ENCODE measurements at regions of chr1 and their contacts with region 1.

Region 1: GRCh38 chr1:38834937-38835827 is 24.4 kb downstream of the RRAGC start:
- DNase-seq: peak; percentile 77
- H3K4me3 ChIP-seq: no peak overlapping the region
- H3K27ac ChIP-seq: no peak overlapping the region
- H3K4me1 ChIP-seq: peaks cover 10% of the 10 kb centered on the region
- H3K27me3 ChIP-seq: peaks cover 16 to 23% of the 10 kb centered on the region in 2 experiments
- CTCF ChIP-seq: peak; percentile 60 to 67
- POLR2A ChIP-seq: no peak

Region 2: DNA sequence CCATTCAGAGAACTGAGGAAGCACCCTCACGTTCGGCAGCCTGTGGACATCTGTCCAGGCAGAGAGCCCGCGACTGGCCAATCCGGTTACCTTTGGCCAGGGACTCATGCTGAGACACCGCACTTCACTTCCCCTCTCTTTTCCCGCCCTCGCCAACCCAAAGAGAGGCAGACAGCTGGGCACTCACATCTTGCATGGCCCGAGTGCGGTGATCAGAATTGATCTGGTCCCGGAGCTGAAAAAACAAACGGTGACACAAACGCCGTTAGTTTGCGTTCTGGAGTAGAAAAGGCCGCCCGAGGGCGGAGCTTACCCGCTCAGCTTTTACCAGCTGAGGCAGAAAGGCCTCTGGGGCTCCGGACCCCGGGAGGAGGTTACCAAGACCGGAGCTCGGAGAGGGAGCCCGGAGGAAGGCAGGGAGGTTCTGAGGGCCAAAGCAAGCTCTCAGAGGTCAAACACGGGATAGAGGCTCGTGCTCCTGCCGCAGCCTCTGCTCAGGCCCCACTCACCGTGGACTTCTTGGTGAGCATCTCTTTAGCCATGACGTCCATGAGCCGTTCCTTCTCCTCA is 845.7 kb before region 1 on chr1:
- CTCF ChIA-PET with region 1: interaction called, 7 read pairs
- POLR2A ChIA-PET with region 1: no interaction called
- dilution Hi-C with region 1: no loop called
- intact Hi-C with region 1: loop called (anchors 2 kb)
- DNase-seq: no peak
- H3K4me3 ChIP-seq: peak overlapping the region; percentile 78 to 81 (median 78)
- H3K27ac ChIP-seq: peak overlapping the region; percentile 24
- H3K4me1 ChIP-seq: peaks cover 9% of the 10 kb centered on the region
- H3K27me3 ChIP-seq: no peaks in the 10 kb centered on the region
- CTCF ChIP-seq: no peak
- POLR2A ChIP-seq: no peak

Region 3: DNA sequence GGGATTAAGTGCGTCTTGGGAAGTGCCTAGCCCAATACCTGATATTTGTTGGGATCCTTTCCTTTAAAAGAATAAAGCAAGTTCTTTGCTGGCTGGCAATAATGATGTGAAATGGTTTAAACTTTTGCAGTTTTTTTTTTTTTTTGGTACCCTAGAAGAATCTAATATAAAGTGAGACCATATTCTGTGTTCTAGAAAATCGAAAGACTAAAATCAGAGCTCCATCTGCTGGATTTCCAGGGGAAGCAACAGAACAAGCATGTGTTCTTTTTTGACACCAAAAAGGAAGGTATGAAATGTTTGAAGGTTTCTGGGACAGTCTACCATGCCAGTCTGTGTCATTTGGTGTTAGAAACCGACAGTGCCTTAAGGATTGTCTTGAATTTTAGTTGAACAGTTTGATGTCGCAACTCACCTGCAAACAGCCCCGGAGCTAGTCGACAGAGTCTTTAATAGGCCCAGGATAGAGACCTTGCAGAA is 816.3 kb before region 1 on chr1:
- CTCF ChIA-PET with region 1: interaction called, 58 read pairs
- POLR2A ChIA-PET with region 1: no interaction called
- dilution Hi-C with region 1: no loop called
- intact Hi-C with region 1: no loop called
- DNase-seq: peak; percentile 28
- H3K4me3 ChIP-seq: no peak overlapping the region
- H3K27ac ChIP-seq: no peak overlapping the region
- H3K4me1 ChIP-seq: peaks cover 32% of the 10 kb centered on the region
- H3K27me3 ChIP-seq: no peaks in the 10 kb centered on the region
- CTCF ChIP-seq: peak; percentile 49 to 55
- POLR2A ChIP-seq: no peak

Region 4: GRCh38 chr1:38037221-38037939 is 797.8 kb before region 1 on chr1:
- CTCF ChIA-PET with region 1: interaction called, 16 read pairs
- POLR2A ChIA-PET with region 1: interaction called, 4 read pairs
- dilution Hi-C with region 1: no loop called
- intact Hi-C with region 1: no loop called
- DNase-seq: no peak
- H3K4me3 ChIP-seq: no peak overlapping the region
- H3K27ac ChIP-seq: no peak overlapping the region
- H3K4me1 ChIP-seq: no peaks in the 10 kb centered on the region
- H3K27me3 ChIP-seq: peaks cover 14 to 18% of the 10 kb centered on the region in 2 experiments
- CTCF ChIP-seq: peak; percentile 21 to 35
- POLR2A ChIP-seq: no peak

Region 5: GRCh38 chr1:38114241-38115026 is 720.7 kb before region 1 on chr1:
- CTCF ChIA-PET with region 1: no interaction called
- POLR2A ChIA-PET with region 1: no interaction called
- dilution Hi-C with region 1: no loop called
- intact Hi-C with region 1: loop called (anchors 10 kb)
- DNase-seq: peak; percentile 43
- H3K4me3 ChIP-seq: no peak overlapping the region
- H3K27ac ChIP-seq: no peak overlapping the region
- H3K4me1 ChIP-seq: peaks cover 11% of the 10 kb centered on the region
- H3K27me3 ChIP-seq: peaks cover 0 to 4% of the 10 kb centered on the region in 2 experiments
- CTCF ChIP-seq: no peak
- POLR2A ChIP-seq: no peak

Region 6: DNA sequence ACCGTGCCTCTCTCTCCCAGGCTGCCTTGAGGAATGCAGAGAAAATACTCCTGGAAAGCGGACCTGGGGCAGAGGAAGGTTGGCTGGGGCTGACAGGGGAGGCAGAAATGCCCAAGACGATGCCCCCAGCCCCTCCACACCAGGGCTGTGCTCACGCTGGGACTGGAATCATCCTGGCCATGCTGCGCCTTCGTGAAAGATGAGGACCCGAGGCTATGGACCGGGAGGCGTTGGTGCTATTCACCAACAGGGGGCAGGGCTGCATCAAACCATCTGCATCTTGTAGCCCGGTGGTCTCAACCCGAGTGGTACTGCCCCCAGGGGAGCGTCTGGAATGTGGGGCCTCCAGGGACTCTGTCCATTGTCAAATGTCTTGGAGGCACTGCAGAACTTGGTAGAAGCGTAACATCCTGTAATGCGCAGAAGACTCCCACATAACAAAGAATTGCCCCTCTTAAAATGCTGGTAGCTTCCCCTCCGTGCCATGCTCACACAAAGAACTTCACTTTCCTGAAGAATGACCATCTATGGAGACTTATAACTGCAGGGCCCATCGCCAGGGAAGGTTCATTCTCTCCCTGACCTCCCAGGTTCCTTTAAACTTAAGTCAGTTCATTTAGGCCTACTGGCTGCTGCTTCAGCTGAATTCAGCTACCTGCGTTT is 226.8 kb before region 1 on chr1:
- CTCF ChIA-PET with region 1: interaction called, 37 read pairs
- POLR2A ChIA-PET with region 1: no interaction called
- dilution Hi-C with region 1: no loop called
- intact Hi-C with region 1: loop called (anchors 1 kb)
- DNase-seq: peak; percentile 32
- H3K4me3 ChIP-seq: no peak overlapping the region
- H3K27ac ChIP-seq: no peak overlapping the region
- H3K4me1 ChIP-seq: no peaks in the 10 kb centered on the region
- H3K27me3 ChIP-seq: no peaks in the 10 kb centered on the region
- CTCF ChIP-seq: peak; percentile 57 to 84
- POLR2A ChIP-seq: no peak

Region 7: GRCh38 chr1:38818175-38818976 is 16.8 kb before region 1 on chr1:
- CTCF ChIA-PET with region 1: interaction called, 26 read pairs
- POLR2A ChIA-PET with region 1: no interaction called
- dilution Hi-C with region 1: no loop called
- intact Hi-C with region 1: no loop called
- DNase-seq: no peak
- H3K4me3 ChIP-seq: no peak overlapping the region
- H3K27ac ChIP-seq: no peak overlapping the region
- H3K4me1 ChIP-seq: peaks cover 4% of the 10 kb centered on the region
- H3K27me3 ChIP-seq: peaks cover 43 to 67% of the 10 kb centered on the region in 2 experiments
- CTCF ChIP-seq: peak; percentile 62 to 85
- POLR2A ChIP-seq: no peak

Region 8: GRCh38 chr1:39105841-39106727 is 270.9 kb after region 1 on chr1:
- CTCF ChIA-PET with region 1: no interaction called
- POLR2A ChIA-PET with region 1: no interaction called
- dilution Hi-C with region 1: no loop called
- intact Hi-C with region 1: no loop called
- DNase-seq: peak; percentile 76
- H3K4me3 ChIP-seq: peak overlapping the region; percentile 70 to 79 (median 77)
- H3K27ac ChIP-seq: peak overlapping the region; percentile 82
- H3K4me1 ChIP-seq: peaks cover 62% of the 10 kb centered on the region
- H3K27me3 ChIP-seq: no peaks in the 10 kb centered on the region
- CTCF ChIP-seq: no peak
- POLR2A ChIP-seq: peak; percentile 66

Measured in endothelial cell of umbilical vein (primary cell).